Activated T-helper 1 cell treated with anti-CD3 and anti-CD28 coated beads, Interleukin-12 subunit alpha, Interleukin-12 subunit beta, Interleukin-2, Interleukin-4 antibody, amounts not matched to agents 30 ng/mL and 10 ng/mL and 1 ng/mL, durations not matched to agents 14 hours and 24 hours and 36 hours (primary cell): ENCODE measurements at regions of chr11 and their contacts with region 1.

Region 1: GRCh38 chr11:114180301-114181055 is 115.7 kb upstream of the NNMT start:
- DNase-seq: no peak
- H3K4me3 Mint-ChIP-seq: no peak overlapping the region
- H3K27ac Mint-ChIP-seq: no peak overlapping the region
- H3K4me1 Mint-ChIP-seq: peaks cover 37% of the 10 kb centered on the region
- H3K27me3 Mint-ChIP-seq: peaks cover 10% of the 10 kb centered on the region

Region 2: DNA sequence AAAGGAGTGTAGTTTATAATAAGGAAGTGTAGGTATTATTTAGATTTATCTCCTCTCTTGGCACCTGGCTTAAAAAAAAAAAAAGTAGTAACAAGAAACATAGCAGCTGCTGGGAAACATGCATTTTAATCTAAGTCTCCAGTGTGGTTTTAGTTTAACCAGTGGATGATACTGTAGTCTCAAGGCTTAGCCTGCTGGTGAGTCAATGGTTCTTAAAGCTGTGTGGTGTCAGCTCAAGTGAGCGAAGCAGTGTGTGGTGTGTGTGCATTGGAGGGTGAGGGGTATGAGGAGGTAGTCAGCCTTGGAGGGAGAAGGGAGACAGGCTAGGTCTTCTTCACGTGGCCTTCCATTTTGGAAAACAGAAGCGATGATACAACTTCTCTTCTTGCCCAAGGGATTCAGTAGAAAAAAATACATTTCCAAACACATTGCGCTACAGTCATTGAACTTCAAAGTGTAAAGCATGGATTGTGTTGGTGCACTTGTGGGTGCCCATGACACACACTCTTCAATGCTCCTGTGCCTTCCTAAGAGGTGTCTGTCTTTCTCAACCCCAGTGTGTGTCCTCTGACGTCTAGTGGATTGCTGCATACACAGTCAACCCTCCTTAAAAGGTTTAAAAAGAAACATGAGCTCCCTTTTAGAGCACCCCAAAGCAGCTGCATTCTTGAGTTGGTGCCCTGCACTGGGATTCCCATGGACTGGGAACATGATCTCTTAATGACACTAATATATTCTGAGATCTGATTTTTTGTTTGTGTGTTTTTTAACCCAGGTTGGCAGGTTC is 80.9 kb before region 1 on chr11:
- intact Hi-C with region 1: loop called (anchors 5 kb)
- DNase-seq: no peak
- H3K4me3 Mint-ChIP-seq: no peak overlapping the region
- H3K27ac Mint-ChIP-seq: no peak overlapping the region
- H3K4me1 Mint-ChIP-seq: peaks cover 19% of the 10 kb centered on the region
- H3K27me3 Mint-ChIP-seq: peaks cover 14% of the 10 kb centered on the region

Region 3: DNA sequence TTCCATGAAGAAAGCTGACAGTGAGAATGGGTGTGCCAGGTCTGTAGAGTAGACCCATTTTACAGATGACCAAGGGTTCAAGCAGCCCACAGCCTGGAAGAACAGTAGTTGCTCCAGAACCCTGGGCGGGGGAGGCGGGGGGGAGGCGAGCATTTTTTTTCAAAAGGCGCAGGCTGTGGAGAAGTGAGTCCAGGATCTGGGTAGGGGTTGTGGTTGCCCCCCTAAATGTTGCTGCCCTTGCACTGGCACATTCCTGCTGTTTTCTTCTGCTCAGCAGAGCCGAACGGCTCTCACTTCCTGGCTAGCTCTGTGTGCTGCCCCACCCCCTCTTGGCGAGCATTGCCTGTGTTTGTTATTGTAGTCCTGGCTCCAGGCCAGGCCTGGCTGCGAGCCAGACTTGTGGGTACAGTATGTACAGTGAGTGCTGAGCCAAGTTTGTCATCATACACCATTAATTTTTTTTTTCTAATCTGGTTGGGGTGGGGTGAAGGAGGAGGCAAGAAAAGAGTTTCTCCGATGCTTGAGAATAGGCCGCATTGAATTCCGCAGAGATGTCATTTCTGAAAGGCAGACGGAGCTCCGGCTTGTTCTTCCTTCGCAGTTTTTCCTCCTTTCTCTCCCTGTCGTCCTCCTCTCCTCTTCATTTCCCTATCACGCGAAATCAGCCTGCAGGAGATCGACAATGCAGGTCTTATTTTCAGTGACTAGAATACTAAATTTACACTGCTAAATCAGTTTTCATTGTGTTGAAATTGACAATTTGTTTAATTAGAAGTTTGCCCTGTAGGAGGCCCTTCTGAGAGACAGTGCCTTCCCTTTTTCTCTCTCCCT is 20.5 kb before region 1 on chr11:
- intact Hi-C with region 1: loop called (anchors 1 kb)
- DNase-seq: peak; percentile 84
- H3K4me3 Mint-ChIP-seq: peak overlapping the region; percentile 35
- H3K27ac Mint-ChIP-seq: peak overlapping the region; percentile 77
- H3K4me1 Mint-ChIP-seq: peaks cover 46% of the 10 kb centered on the region
- H3K27me3 Mint-ChIP-seq: peaks cover under 1% of the 10 kb centered on the region

Region 4: DNA sequence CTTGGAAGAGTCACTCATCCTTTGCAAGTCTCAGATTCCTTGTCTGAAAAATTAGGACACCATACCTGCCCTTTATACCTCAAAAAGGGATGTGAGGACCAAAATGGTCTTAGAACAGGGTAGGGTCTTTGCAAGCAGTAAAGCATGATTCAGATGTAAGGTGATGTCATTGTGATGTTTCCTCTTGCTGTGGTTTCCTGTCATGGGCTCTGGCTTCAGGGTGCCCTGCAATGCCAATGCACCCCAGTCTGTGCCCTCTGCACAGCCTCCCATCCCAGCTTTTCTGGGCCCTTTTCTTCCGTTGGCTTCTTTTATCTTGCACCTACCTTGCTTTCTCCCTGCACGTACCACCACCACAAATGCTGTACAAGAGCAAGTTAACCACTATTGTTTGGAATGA is 27.9 kb after region 1 on chr11:
- intact Hi-C with region 1: loop called (anchors 1 kb)
- DNase-seq: peak; percentile 19
- H3K4me3 Mint-ChIP-seq: no peak overlapping the region
- H3K27ac Mint-ChIP-seq: peak overlapping the region; percentile 25
- H3K4me1 Mint-ChIP-seq: peaks cover 39% of the 10 kb centered on the region
- H3K27me3 Mint-ChIP-seq: peaks cover 8% of the 10 kb centered on the region